Activated T-helper 1 cell treated with anti-CD3 and anti-CD28 coated beads, Interleukin-12 subunit alpha, Interleukin-12 subunit beta, Interleukin-2, Interleukin-4 antibody, amounts not matched to agents 30 ng/mL and 10 ng/mL and 1 ng/mL, durations not matched to agents 14 hours and 24 hours and 36 hours (primary cell): ENCODE measurements at regions of chr9 and their contacts with region 1.

Region 1: GRCh38 chr9:87725900-87726709 is at the start of gene CTSL:
- DNase-seq: peak; percentile 13
- H3K4me3 Mint-ChIP-seq: peak within 1 kb of the TSS; percentile 80
- H3K27ac Mint-ChIP-seq: no peak within 1 kb of the TSS
- H3K4me1 Mint-ChIP-seq: no peaks in the 10 kb centered on the region
- H3K27me3 Mint-ChIP-seq: peaks cover 39% of the 10 kb centered on the region
- total RNA-seq, gene CTSL: 1.5 and 2.5 TPM in 2 replicates

Region 2: GRCh38 chr9:87684627-87685219 is 41.4 kb before region 1 on chr9:
- intact Hi-C with region 1: loop called (anchors 5 kb)
- DNase-seq: no peak
- H3K4me3 Mint-ChIP-seq: no peak overlapping the region
- H3K27ac Mint-ChIP-seq: no peak overlapping the region
- H3K4me1 Mint-ChIP-seq: peaks cover 6% of the 10 kb centered on the region
- H3K27me3 Mint-ChIP-seq: peaks cover 5% of the 10 kb centered on the region